ENCODE measurements at regions of chr3 and their contacts with region 1.

Region 1: DNA sequence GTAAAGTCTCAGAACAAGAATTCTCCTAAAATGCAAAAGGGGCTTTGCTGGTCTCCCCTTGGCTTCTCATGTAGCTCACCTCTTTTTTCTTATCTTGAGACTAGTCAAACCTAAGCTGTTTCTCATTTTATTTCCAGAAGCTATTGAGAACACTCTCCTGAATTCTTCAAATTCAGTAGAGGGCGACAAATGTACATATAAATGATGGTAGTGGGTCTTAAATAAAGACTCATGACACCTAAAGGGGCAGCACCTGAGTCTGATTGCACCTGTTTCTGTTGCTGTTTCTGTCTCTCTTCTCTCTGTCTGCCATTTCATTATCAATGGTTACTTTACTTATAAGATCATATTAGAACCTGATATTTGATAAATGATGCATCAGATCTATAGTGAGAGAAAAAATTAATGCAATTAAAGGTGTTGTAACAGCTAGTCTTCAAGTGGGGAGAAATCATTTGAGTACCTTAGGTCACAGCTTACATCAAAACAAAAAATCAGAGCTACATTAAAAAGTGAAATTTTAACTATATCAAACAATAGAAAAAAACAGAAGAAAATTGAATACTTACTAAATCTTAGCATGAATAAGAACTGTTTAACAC is 7.0 kb downstream of the ADIPOQ start:
- DNase-seq: no peak
- ATAC-seq: peak in 3 of 4 donors; percentile 43 to 64 (median 56)
- H3K4me3 ChIP-seq: no peak overlapping the region
- H3K27ac ChIP-seq: no peak overlapping the region
- H3K4me1 ChIP-seq: no peaks in the 10 kb centered on the region
- H3K27me3 ChIP-seq: no peaks in the 10 kb centered on the region
- CTCF ChIP-seq: peak in 1 of 4 donors; percentile 36

Region 2: DNA sequence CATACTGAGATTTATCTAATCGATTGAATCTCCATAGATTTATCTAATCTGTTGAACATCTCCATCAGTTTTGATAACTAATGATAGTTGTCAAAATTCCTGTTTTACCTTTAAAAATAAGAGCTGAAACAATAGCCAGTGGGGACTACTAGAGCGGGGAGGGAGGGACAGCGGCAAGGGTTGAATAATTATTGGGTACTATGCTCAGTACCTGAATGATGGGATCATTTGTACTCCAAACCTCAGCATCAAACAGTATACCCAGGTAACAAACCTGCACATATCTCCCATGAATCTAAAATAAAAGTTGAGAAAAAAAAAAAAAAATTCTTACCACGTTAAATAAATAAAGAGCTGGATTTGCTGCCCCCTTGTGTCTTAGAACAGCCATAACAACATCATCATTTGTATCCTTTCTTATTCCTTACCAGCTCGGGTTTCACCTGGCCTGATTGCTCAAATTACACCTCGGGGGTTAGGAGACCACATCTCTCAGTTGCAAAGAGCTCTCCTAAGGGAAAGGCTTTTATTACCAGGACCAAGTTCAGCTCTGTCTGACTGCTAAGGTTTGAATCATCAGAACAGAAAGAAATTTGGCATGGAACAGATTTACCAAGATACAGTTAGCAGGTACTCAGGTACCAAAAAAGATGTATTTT is 315.5 kb after region 1 on chr3:
- intact Hi-C with region 1: loop called in 1 of 3 experiments (anchors 5 kb)
- DNase-seq: peak in 2 of 6 donors; percentile 15 to 35
- ATAC-seq: peak; percentile 53 to 85 (median 74)
- H3K4me3 ChIP-seq: no peak overlapping the region
- H3K27ac ChIP-seq: no peak overlapping the region
- H3K4me1 ChIP-seq: no peaks in the 10 kb centered on the region
- H3K27me3 ChIP-seq: no peaks in the 10 kb centered on the region
- CTCF ChIP-seq: peak; percentile 53 to 68 (median 62)

Region 3: DNA sequence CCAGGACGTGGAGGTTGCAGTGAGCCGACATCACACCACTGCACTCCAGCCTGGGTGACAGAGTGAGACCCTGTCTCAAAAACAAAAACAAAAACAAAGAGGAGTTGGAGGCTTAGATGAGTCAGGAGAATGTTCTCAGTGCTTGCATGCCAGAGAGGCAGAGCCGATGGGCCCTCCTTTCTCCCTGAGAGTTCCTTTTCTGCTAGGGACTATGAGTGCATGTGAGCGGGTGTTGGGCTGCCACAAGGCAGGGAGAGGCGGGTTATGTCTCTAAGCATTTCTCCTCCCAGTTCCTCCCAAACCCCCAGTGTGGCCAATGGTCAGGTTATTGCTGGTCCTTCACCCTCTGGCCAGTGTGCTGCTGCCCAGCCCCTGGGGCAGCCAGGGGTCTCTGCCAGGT is 393.0 kb after region 1 on chr3:
- intact Hi-C with region 1: no loop called
- DNase-seq: no peak
- ATAC-seq: no peak
- H3K4me3 ChIP-seq: no peak overlapping the region
- H3K27ac ChIP-seq: no peak overlapping the region
- H3K4me1 ChIP-seq: no peaks in the 10 kb centered on the region
- H3K27me3 ChIP-seq: no peaks in the 10 kb centered on the region
- CTCF ChIP-seq: no peak